ENCODE measurements at regions of chr2 and their contacts with region 1.

Region 1: DNA sequence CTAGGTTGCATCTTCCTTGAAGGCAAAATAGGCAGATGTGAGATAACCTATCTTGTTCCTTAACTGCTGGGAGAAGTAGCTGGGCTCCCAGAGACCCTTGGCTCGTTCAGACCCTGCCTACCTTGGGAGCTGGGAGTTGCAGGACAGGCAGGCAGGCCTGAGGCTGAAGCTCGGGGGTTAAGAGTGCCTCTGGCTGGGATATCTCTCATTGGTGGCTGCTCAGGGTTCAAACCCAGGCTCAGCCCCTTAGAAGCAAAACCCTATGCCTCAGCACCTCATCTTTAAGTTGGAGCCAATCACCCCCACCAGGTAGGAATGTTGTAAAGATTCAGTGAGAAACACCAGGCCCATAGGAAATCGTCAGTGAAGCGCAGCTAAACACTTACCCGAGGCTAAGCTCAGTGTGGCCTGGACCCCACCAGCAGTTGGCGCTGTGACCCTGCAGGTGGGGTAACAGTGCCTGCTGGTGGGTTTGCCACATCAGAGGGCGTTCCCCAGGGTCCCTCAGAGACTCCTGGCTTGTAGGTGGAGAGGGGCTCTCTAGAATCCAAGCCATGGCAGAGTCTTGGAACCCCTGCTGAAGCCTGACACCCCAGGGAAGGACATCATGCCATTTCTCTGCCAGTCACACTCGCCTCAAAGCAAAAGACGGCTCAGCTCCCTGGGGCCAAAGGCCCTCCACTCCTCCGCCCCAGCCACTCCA is 54.6 kb upstream of the GPR17 start:
- DNase-seq: peak; percentile 88
- ATAC-seq: peak; percentile 98
- H3K4me3 Mint-ChIP-seq: no peak overlapping the region
- H3K27ac Mint-ChIP-seq: no peak overlapping the region
- H3K4me1 Mint-ChIP-seq: peaks cover 3% of the 10 kb centered on the region; the same call in 1 of the 2 replicates
- H3K27me3 Mint-ChIP-seq: no peaks in the 10 kb centered on the region
- CTCF ChIP-seq: peak; percentile 61

Region 2: GRCh38 chr2:127566576-127566975 is 24.8 kb before region 1 on chr2:
- CTCF ChIA-PET with region 1: interaction called, 25 read pairs
- POLR2A ChIA-PET with region 1: no interaction called
- DNase-seq: no peak
- ATAC-seq: peak; percentile 65
- H3K4me3 Mint-ChIP-seq: no peak overlapping the region
- H3K27ac Mint-ChIP-seq: no peak overlapping the region
- H3K4me1 Mint-ChIP-seq: peaks cover 6% of the 10 kb centered on the region
- H3K27me3 Mint-ChIP-seq: no peaks in the 10 kb centered on the region
- CTCF ChIP-seq: no peak

Region 3: GRCh38 chr2:127625081-127625943 is 33.9 kb after region 1 on chr2:
- CTCF ChIA-PET with region 1: interaction called, 11 read pairs
- POLR2A ChIA-PET with region 1: interaction called, 3 read pairs
- DNase-seq: no peak
- ATAC-seq: no peak
- H3K4me3 Mint-ChIP-seq: no peak overlapping the region
- H3K27ac Mint-ChIP-seq: no peak overlapping the region
- H3K4me1 Mint-ChIP-seq: no peaks in the 10 kb centered on the region
- H3K27me3 Mint-ChIP-seq: no peaks in the 10 kb centered on the region
- CTCF ChIP-seq: no peak

Region 4: DNA sequence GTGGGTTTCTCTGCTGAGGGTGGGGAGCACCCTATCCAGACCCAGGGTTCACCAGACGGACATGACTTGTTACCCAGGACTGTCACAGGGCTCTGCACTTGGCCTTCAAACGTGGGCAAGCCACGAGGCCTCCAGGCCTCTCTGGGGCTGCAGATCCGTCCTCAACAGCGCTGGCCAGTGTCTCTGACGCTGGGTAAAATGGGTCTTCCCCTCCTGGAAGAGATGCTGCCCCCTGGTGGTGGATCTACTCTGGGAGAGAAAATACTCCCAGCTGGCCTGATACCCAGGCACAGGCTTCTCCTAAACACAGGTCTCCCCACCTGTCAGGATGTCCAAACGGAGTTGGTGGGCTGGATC is 58.3 kb after region 1 on chr2:
- CTCF ChIA-PET with region 1: interaction called, 120 read pairs
- POLR2A ChIA-PET with region 1: no interaction called
- DNase-seq: peak; percentile 88
- ATAC-seq: peak; percentile 74
- H3K4me3 Mint-ChIP-seq: no peak overlapping the region
- H3K27ac Mint-ChIP-seq: no peak overlapping the region
- H3K4me1 Mint-ChIP-seq: peaks cover 9% of the 10 kb centered on the region
- H3K27me3 Mint-ChIP-seq: peaks cover 2% of the 10 kb centered on the region; the same call in 1 of the 2 replicates
- CTCF ChIP-seq: peak; percentile 72

Region 5: DNA sequence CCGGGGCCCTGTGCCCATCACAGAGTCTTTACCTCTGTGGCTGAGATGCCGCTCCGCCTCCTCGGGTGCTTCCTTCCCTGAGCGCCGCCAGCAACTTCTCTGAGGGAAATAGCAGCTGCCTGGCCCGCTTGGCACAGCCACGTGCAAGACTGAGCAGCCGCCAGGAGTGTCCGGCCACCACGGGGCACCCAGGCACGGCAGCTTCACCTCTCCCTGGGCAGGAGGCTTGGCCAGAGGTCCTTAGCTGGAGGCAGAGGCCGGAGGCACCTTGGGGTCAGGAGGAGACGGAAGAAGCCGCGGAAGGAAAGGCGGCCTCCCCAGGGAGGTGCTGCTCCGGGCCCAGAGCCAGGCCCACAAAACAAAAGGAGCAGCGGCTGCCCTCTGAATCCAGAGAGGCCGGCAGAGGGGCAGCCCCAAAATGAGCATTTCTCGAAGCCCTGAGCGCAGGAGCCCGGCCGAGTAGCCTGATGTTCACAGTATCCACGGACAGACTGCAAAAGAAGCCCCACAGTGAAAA is 90.0 kb after region 1 on chr2:
- CTCF ChIA-PET with region 1: interaction called, 46 read pairs
- POLR2A ChIA-PET with region 1: no interaction called
- DNase-seq: no peak
- ATAC-seq: peak; percentile 55
- H3K4me3 Mint-ChIP-seq: no peak overlapping the region
- H3K27ac Mint-ChIP-seq: no peak overlapping the region
- H3K4me1 Mint-ChIP-seq: no peaks in the 10 kb centered on the region
- H3K27me3 Mint-ChIP-seq: peaks cover 23% of the 10 kb centered on the region
- CTCF ChIP-seq: no peak